Panc1 (cell line): ENCODE measurements at regions of chr2 and their contacts with region 1.

Region 1: GRCh38 chr2:206260188-206261012 is 14.1 kb upstream of the ZDBF2 start:
- DNase-seq: peak; percentile 7
- ATAC-seq: peak; percentile 83
- H3K4me3 ChIP-seq: no peak overlapping the region
- H3K27ac ChIP-seq: no peak overlapping the region
- H3K4me1 ChIP-seq: no peaks in the 10 kb centered on the region
- H3K27me3 ChIP-seq: peaks cover 13% of the 10 kb centered on the region
- CTCF ChIP-seq: peak; percentile 55

Region 2: DNA sequence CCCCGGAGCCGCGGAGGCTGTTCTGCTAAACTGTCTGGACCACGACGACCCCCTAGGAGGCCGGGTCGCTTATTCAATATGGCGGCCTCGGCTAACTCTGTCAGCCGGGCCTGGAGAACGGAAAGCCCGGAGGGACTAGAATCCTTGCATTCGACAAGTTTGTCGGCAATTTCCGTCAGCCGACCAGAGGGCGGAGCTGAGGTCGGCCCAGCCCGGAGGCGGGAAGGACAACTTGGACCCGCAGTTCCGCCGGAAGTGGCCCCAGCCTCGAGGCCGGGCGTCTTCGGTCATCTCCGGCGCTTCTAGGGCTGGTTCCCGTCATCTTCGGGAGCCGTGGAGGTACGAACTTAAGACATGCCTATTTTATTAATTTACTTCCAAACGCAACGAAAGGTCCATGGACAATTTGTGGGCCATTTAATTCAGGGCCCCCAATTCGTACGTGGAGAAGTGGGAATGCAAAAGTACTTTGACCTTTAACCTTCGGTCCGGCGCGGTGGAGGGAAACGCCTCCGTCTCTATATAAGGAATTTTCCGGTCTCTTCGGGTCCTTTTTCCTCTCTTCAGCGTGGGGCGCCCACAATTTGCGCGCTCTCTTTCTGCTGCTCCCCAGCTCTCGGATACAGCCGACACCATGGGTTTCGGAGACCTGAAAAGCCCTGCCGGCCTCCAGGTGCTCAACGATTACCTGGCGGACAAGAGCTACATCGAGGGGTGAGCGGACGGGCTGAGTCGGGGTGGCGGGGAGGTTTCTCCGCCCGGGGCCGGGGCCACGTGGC is 100.9 kb before region 1 on chr2 and contains the starts of genes EEF1B2 and NDUFS1:
- CTCF ChIA-PET with region 1: interaction called, 3 read pairs
- POLR2A ChIA-PET with region 1: no interaction called
- in situ Hi-C with region 1: no loop called
- intact Hi-C with region 1: loop called (anchors 5 kb)
- DNase-seq: peak; percentile 90
- ATAC-seq: peak; percentile 97
- H3K4me3 ChIP-seq: peak within 1 kb of the TSS; percentile 99 to 100
- H3K27ac ChIP-seq: peak within 1 kb of the TSS; percentile 99
- H3K4me1 ChIP-seq: peaks cover 22% of the 10 kb centered on the region
- H3K27me3 ChIP-seq: no peaks in the 10 kb centered on the region
- CTCF ChIP-seq: no peak
- total RNA-seq, gene EEF1B2: 523 TPM
- total RNA-seq, gene NDUFS1: 106 TPM